ENCODE measurements at regions of chr15 and their contacts with region 1.

Region 1: GRCh38 chr15:51649659-51650521 is 27.3 kb upstream of the DMXL2 start:
- DNase-seq: peak; percentile 59
- H3K4me3 ChIP-seq: no peak overlapping the region
- H3K27ac ChIP-seq: no peak overlapping the region
- H3K4me1 ChIP-seq: no peaks in the 10 kb centered on the region
- H3K27me3 ChIP-seq: no peaks in the 10 kb centered on the region
- CTCF ChIP-seq: peak; percentile 53

Region 2: GRCh38 chr15:51776952-51777574 is 127.2 kb after region 1 on chr15:
- intact Hi-C with region 1: loop called (anchors 2 kb)
- DNase-seq: peak; percentile 74
- H3K4me3 ChIP-seq: no peak overlapping the region
- H3K27ac ChIP-seq: no peak overlapping the region
- H3K4me1 ChIP-seq: no peaks in the 10 kb centered on the region
- H3K27me3 ChIP-seq: no peaks in the 10 kb centered on the region
- CTCF ChIP-seq: peak; percentile 61

Region 3: DNA sequence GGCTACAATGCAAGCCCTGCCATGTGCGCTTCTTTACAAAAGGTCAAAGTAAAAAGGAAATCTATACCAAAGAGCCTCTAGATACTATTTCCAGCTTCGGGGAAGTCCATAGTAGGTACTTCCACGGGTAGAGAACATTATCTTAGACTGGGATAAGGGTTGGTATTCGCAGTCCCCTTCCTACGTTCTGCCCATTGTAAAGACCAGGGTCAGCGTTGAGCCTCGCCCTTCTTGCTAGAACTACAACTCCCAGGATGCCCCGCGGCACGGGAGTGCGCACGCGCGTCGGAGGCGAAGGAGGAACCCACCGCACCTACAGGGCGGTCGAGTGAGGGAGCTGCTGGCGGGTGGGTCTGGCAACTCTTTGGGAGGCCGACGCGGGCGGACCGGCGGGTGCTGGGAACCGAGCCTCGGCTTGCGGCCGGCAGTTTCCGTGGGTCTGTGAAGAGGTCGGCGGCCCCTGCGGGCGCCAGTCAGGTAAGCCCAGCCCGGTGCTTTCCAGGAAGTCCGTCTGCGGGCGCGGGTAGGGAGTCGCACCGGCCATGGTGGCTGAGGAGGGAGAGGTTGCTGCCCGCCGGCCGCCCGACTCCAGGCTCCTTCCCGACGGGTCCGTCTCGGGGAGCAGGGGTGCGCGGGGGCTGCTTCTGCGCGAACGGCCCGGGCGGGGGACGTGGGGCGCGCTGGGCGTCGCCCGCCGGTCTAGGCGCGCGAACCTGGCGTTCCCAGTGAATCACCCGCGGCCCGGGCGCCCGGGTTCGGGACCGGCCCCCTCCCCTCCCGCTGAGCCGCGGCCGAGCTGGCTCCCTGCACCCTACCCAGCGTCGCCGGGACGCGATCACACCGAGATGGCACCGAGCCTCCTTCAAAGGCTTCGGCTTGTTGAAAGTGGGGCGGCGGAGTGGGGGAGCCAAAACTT is 179.7 kb after region 1 on chr15 and contains the start of gene TMOD3:
- intact Hi-C with region 1: no loop called
- DNase-seq: peak; percentile 98
- H3K4me3 ChIP-seq: peak within 1 kb of the TSS; percentile 93
- H3K27ac ChIP-seq: peak within 1 kb of the TSS; percentile 97
- H3K4me1 ChIP-seq: no peaks in the 10 kb centered on the region
- H3K27me3 ChIP-seq: no peaks in the 10 kb centered on the region
- CTCF ChIP-seq: no peak
- total RNA-seq, gene TMOD3: 68.4 to 78.6 TPM

Measured in colonic mucosa (tissue), 4 donors.